CD4-positive, alpha-beta T cell (primary cell): ENCODE measurements at regions of chr3 and their contacts with region 1.

Region 1: DNA sequence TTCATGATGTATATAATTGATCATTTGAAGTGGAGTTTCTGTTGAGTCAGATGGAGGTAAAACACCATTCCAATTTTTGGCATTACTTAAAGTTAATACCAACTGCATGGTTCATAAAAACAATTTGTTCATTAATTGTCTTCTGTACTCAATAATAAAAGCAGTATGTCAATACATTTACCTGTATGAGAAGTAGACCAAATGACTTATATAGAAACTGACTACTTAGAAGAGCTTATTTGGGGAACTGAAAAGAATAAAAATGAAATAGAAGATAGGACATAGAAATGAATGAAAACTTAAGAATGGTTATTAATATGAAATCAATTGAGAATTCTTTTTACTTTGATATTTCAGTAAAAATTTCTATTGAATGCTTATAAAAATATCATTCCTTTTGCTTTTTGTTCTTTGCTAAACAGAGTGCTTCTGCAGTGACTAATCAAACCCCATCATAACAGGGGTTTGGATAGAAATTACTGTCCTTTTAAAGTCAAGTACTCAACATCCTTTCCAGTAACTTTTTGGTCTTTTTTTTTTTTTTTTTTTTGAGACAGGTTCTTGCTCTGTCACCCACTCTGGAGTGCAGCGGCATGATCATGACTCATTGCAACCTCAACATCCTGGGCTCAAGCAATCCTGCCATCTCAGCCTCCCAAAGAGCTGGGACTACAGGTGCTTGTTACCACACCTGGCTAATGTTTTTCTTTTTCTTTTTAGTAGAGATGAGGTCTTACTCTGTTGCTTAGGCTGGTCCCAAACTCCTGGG is 6.5 kb upstream of the CRYBG3 start:
- DNase-seq: peak in 10 of 14 experiments; percentile 14 to 62 (median 32)
- ATAC-seq: peak; percentile 95
- H3K4me3 ChIP-seq: no peak overlapping the region
- H3K4me3 Mint-ChIP-seq: no peak overlapping the region
- H3K27ac ChIP-seq: no peak overlapping the region
- H3K27ac Mint-ChIP-seq: no peak overlapping the region
- H3K4me1 ChIP-seq: peaks cover 5% of the 10 kb centered on the region
- H3K4me1 Mint-ChIP-seq: no peaks in the 10 kb centered on the region
- H3K27me3 ChIP-seq: no peaks in the 10 kb centered on the region
- H3K27me3 Mint-ChIP-seq: peaks cover 19% of the 10 kb centered on the region
- CTCF ChIP-seq: no peak

Region 2: DNA sequence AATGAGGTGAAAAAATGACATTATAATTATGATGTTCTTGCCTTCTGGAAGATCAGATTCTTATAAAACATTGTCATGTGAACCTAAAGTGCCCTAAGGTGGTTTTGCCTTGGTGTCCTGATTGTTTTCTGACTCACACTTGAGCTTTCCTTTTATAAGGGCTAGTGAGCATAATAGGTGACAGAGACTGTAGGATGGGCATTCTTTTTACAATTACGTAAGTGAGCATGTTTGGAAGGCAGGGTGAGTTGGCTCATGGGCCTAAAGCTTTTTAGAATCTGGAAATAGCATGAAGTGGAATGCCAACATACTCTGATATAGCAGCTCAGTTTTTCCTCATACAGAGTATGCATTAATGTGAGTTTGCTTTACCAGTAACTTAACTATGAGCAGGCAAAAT is 47.7 kb after region 1 on chr3:
- CTCF ChIA-PET with region 1: no interaction called
- POLR2A ChIA-PET with region 1: no interaction called
- intact Hi-C with region 1: no loop called
- DNase-seq: no peak
- ATAC-seq: no peak
- H3K4me3 ChIP-seq: no peak overlapping the region
- H3K4me3 Mint-ChIP-seq: no peak overlapping the region
- H3K27ac ChIP-seq: no peak overlapping the region
- H3K27ac Mint-ChIP-seq: no peak overlapping the region
- H3K4me1 ChIP-seq: no peaks in the 10 kb centered on the region
- H3K4me1 Mint-ChIP-seq: no peaks in the 10 kb centered on the region
- H3K27me3 ChIP-seq: no peaks in the 10 kb centered on the region
- H3K27me3 Mint-ChIP-seq: no peaks in the 10 kb centered on the region
- CTCF ChIP-seq: no peak

Region 3: DNA sequence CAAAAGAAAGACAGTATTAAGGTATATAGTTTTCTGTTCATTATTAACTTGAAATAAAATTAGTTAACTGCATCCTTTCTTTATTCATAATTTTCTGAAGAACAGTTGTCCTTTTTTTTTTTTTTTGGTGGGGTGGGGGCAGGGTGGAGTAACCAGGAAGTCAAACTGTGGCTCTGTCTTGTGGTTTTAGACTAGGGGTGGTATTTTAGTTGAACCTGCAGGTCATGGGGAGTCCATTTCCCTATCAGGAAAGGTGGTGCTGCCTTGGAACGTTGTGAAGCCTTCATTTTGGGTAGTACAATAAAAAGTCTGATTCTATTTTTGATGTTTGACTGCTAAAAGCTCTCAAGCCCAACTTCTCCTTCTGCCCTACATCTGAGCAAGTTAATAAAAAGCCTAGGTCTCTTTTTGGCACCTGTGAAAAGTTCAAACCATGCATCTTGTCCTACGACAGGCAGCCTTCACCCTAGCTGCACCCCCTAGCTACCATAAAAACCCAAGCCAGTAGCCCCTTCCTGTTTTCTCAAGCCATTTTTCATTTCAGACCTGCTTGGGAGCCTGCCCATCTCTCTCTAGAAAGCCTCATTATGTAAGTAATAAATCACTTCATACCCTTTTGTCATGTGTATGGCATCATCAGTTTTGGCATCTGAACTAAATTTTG is 188.1 kb after region 1 on chr3:
- CTCF ChIA-PET with region 1: no interaction called
- POLR2A ChIA-PET with region 1: no interaction called
- intact Hi-C with region 1: loop called in 1 of 2 experiments (anchors 5 kb)
- DNase-seq: peak in 3 of 14 experiments; percentile 23 to 62 (median 26)
- ATAC-seq: peak; percentile 59
- H3K4me3 ChIP-seq: no peak overlapping the region
- H3K4me3 Mint-ChIP-seq: peak overlapping the region; percentile 4
- H3K27ac ChIP-seq: no peak overlapping the region
- H3K27ac Mint-ChIP-seq: no peak overlapping the region
- H3K4me1 ChIP-seq: peaks cover 19% of the 10 kb centered on the region
- H3K4me1 Mint-ChIP-seq: peaks cover 36% of the 10 kb centered on the region
- H3K27me3 ChIP-seq: no peaks in the 10 kb centered on the region
- H3K27me3 Mint-ChIP-seq: no peaks in the 10 kb centered on the region
- CTCF ChIP-seq: no peak